ENCODE measurements at regions of chr2 and their contacts with region 1.

Region 1: DNA sequence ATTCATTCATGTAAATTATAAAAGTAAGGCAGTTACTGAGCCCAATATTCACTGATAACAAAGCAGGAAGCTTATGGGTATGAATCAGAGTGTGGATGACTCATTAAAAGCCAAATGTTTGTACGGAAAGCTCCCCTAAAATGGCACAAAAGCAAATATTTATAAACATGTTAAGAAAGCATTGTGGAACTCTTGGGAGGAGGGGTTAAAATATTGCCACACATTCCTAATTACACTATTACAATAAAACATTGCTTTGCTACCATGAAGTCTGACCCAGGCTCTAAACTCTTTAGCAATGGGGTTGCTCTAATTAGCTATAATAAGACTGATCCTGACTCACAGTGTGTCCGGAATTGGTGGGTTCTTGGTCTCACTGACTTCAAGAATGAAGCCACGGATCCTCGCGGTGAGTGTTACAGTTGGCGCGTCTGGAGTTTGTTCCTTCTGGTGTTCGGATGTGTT is 110.9 kb downstream of the NAB1 start:
- DNase-seq: no peak
- H3K4me3 ChIP-seq: no peak overlapping the region
- H3K27ac ChIP-seq: no peak overlapping the region
- H3K4me1 ChIP-seq: peaks cover 0 to 11% (median 3%) of the 10 kb centered on the region in 4 donors
- H3K27me3 ChIP-seq: no peaks in the 10 kb centered on the region
- CTCF ChIP-seq: no peak
- EP300 ChIP-seq: no peak
- POLR2A ChIP-seq: no peak

Region 2: DNA sequence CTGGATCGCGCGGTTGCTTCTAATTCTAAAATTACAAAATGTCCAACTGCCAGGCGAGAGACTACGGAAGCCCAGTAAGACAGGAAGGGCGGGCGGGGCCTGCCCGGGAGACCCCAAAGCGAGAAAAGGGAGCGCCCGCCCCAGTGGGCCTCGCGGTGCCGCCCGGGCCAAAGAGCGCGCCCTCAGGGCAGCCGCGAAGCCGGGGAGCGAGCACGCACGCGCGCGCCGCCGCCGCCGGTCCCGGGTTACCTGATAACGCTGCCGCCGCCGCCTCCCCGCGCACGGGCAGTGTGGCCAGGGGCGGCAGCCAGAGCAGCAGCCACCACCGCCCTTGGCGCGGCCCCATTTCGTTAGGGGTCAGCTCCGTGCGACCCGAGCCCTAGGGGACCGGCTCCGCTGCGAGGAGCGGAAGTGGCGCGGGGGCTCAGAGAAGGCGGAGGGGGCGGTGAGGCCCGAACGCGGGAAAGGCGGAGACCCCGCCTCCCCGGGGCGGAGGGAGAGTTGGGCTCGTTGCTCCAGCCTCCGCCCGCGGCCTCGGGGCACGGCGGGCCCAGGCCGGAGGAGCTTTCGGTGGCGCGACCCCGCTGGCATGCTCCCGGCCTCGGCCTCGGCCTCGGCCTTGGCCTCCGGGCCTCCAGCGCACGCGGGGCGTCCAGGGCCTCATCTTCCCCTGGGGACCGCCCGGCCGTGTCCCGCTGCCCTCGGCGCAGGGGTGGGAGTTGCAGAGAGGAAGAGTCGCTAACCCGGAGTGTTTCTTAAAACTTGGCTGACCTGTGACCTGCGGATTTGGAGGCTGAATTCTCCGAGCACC is 225.3 kb before region 1 on chr2 and contains the start of gene NEMP2:
- intact Hi-C with region 1: loop called (anchors 10 kb)
- DNase-seq: peak; percentile 83
- H3K4me3 ChIP-seq: peak within 1 kb of the TSS; percentile 69 to 81 (median 76)
- H3K27ac ChIP-seq: peak within 1 kb of the TSS; percentile 94 to 97 (median 96)
- H3K4me1 ChIP-seq: peaks cover 0 to 23% (median 9%) of the 10 kb centered on the region in 4 donors
- H3K27me3 ChIP-seq: no peaks in the 10 kb centered on the region
- CTCF ChIP-seq: peak in 1 of 4 experiments; percentile 5
- EP300 ChIP-seq: no peak
- POLR2A ChIP-seq: peak in 1 of 2 donors; percentile 34
- total RNA-seq, gene NEMP2: 3.1 to 6.8 (median 4.7) TPM

Region 3: GRCh38 chr2:190744041-190744440 is 15.7 kb before region 1 on chr2:
- intact Hi-C with region 1: no loop called
- DNase-seq: no peak
- H3K4me3 ChIP-seq: no peak overlapping the region
- H3K27ac ChIP-seq: no peak overlapping the region
- H3K4me1 ChIP-seq: no peaks in the 10 kb centered on the region
- H3K27me3 ChIP-seq: no peaks in the 10 kb centered on the region
- CTCF ChIP-seq: no peak
- EP300 ChIP-seq: no peak
- POLR2A ChIP-seq: no peak

Region 4: GRCh38 chr2:190812506-190813294 is 52.9 kb after region 1 on chr2:
- intact Hi-C with region 1: no loop called
- DNase-seq: no peak
- H3K4me3 ChIP-seq: no peak overlapping the region
- H3K27ac ChIP-seq: no peak overlapping the region
- H3K4me1 ChIP-seq: peaks cover 0 to 7% (median 3%) of the 10 kb centered on the region in 4 donors
- H3K27me3 ChIP-seq: no peaks in the 10 kb centered on the region
- CTCF ChIP-seq: no peak
- EP300 ChIP-seq: no peak
- POLR2A ChIP-seq: no peak